ENCODE measurements at regions of chr16 and their contacts with region 1.

Region 1: DNA sequence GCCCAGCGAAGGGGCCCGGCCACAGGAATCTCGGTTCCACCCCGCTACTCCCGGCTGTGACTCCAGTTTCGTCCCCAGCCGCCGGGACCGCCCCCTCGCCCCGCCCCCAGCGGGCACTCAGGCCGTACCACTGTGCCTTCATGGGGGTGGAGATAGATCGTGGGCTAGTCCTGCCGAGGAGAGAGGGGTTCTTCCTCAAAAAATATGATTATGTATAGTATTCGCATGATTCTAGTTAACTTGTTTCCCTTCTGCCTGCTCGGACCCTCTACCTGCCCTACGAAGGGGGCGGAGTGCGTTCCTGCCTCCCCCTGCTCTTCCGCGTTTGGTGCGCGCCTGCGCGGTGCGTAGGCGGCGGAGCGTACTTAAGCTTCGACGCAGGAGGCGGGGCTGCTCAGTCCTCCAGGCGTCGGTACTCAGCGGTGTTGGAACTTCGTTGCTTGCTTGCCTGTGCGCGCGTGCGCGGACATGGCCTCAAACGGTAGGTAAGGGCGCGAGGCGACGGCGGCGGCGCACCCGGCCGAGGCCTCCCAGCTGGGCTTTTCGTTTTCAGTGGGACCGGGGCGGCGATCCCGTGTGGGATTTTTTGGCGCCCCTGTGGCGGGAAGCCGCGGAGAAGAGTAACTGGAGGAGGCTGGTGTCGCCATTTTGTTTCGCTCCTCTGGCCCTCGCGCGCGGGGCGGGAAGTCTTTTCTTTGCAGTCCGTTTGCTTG is at the start of gene FUS:
- DNase-seq: peak; percentile 83 to 98 (median 92)
- ATAC-seq: peak; percentile 54 to 62
- H3K4me3 Mint-ChIP-seq: peak within 1 kb of the TSS; percentile 92 to 98 (median 95)
- H3K27ac Mint-ChIP-seq: peak within 1 kb of the TSS; percentile 97 to 100 (median 99)
- H3K4me1 Mint-ChIP-seq: peaks cover 43 to 70% (median 59%) of the 10 kb centered on the region in 4 donors
- H3K27me3 Mint-ChIP-seq: peaks cover 0 to 3% (median 0%) of the 10 kb centered on the region in 5 donors
- polyA plus RNA-seq, gene FUS: 118 to 163 (median 149) TPM

Region 2: GRCh38 chr16:31073968-31074813 is 105.7 kb before region 1 on chr16 and contains the starts of genes ZNF646 and ZNF668:
- POLR2A ChIA-PET with region 1: interaction called, 41 read pairs
- DNase-seq: peak; percentile 90 to 99 (median 98)
- ATAC-seq: peak; percentile 80 to 84
- H3K4me3 Mint-ChIP-seq: peak within 1 kb of the TSS; percentile 81 to 97 (median 96)
- H3K27ac Mint-ChIP-seq: peak within 1 kb of the TSS; percentile 90 to 99 (median 96)
- H3K4me1 Mint-ChIP-seq: peaks cover 21 to 52% (median 45%) of the 10 kb centered on the region in 4 donors
- H3K27me3 Mint-ChIP-seq: no peaks in the 10 kb centered on the region
- polyA plus RNA-seq, gene ZNF646: 2.8 to 9.1 (median 4.0) TPM
- polyA plus RNA-seq, gene ZNF668: 4.2 to 9.1 (median 7.5) TPM

Region 3: DNA sequence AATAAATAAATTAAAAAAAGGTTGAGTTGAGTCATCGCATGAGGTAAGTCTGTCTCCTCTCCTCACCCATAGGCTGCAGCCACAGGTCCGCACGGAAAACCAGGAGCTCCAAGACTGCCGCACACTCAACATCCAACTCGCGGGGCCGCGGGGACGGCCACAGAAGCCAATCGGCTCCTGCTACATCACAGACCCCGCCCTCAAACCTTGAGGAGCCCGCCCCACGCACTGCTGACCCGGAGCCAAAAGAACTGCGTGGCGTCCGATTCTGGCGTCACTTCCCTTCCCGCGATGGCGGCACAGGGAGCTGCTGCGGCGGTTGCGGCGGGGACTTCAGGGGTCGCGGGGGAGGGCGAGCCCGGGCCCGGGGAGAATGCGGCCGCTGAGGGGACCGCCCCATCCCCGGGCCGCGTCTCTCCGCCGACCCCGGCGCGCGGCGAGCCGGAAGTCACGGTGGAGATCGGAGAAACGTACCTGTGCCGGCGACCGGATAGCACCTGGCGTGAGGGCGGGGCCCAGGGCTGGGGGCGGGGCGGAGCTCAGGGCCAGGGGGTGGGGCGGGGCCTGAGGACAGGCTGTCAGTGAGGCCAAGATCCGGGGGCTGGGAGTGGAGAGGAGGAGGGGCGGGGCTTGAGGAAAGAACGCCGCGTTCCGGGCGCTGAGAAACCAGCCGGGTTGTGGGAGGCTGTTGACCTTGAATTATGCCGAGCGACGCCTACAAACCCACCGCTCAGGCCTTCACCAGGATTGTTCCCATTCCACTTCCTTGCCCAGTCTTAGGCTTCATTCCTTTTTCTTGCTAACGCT is 62.3 kb before region 1 on chr16 and contains the start of gene KAT8:
- POLR2A ChIA-PET with region 1: interaction called, 39 read pairs
- DNase-seq: peak; percentile 93 to 99 (median 98)
- ATAC-seq: peak; percentile 92
- H3K4me3 Mint-ChIP-seq: peak within 1 kb of the TSS; percentile 83 to 93 (median 88)
- H3K27ac Mint-ChIP-seq: peak within 1 kb of the TSS; percentile 68 to 97 (median 94)
- H3K4me1 Mint-ChIP-seq: peaks cover 18 to 38% (median 24%) of the 10 kb centered on the region in 4 donors
- H3K27me3 Mint-ChIP-seq: no peaks in the 10 kb centered on the region
- polyA plus RNA-seq, gene KAT8: 58.0 to 90.5 (median 67.4) TPM

Region 4: GRCh38 chr16:31157136-31157535 is 22.8 kb before region 1 on chr16:
- POLR2A ChIA-PET with region 1: interaction called, 20 read pairs
- DNase-seq: no peak
- ATAC-seq: no peak
- H3K4me3 Mint-ChIP-seq: peak overlapping the region in 8 of 10 donors; percentile 31 to 65 (median 48)
- H3K27ac Mint-ChIP-seq: peak overlapping the region in 3 of 10 donors; percentile 35 to 66 (median 60)
- H3K4me1 Mint-ChIP-seq: peaks cover 0 to 11% (median 5%) of the 10 kb centered on the region in 4 donors
- H3K27me3 Mint-ChIP-seq: no peaks in the 10 kb centered on the region

Region 5: GRCh38 chr16:31196324-31197088 is 16.6 kb after region 1 on chr16:
- POLR2A ChIA-PET with region 1: interaction called, 164 read pairs
- DNase-seq: no peak
- ATAC-seq: no peak
- H3K4me3 Mint-ChIP-seq: peak overlapping the region in 1 of 10 donors; percentile 34
- H3K27ac Mint-ChIP-seq: peak overlapping the region in 8 of 10 donors; percentile 8 to 79 (median 62)
- H3K4me1 Mint-ChIP-seq: peaks cover 31 to 66% (median 58%) of the 10 kb centered on the region in 4 donors
- H3K27me3 Mint-ChIP-seq: no peaks in the 10 kb centered on the region

Region 6: DNA sequence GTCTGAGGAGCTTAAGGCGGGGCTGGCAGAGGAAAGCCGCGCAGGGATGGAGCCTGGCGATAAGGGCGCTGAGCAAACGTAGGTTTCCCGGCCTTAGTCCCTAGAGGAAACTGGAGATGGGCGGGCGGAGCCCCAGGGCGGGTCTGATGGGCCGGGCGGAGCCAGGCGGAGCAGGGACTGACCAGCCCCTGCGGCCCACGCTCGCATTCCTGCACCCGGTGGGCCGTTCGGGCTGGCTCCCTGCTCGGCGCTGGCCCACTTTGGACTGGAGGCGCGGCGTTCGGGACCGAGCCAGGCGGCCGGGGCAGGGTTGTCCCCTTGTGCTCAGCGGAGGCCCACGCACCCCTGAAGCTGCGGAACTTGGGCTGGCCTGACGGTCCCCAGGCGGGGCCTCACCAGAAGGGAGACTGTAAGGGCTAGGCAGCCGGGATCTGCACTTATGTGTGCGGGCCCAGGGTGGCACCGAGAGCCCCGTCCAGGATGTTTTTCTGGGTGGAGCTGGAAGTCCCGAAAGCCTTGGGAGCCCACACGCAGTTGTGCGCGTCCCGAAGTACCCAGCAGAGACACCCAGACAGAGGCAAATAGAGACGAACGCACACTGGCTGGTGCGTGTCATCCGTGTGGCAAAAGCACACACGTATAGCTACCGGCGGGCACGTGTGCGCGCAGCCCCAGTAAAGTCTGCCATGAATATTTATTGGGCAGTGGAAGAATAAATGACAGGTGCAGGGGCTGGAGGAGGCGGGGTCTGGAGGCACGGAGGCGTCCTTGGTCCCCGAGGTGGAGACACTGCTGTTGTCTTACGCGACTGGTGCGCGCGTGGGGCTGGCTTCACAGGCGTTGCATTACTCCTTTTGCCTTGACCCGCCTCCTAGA is 35.6 kb after region 1 on chr16:
- POLR2A ChIA-PET with region 1: interaction called, 15 read pairs
- DNase-seq: peak in 2 of 10 donors; percentile 15 to 23
- ATAC-seq: peak; percentile 51 to 73
- H3K4me3 Mint-ChIP-seq: peak overlapping the region; percentile 67 to 91 (median 81)
- H3K27ac Mint-ChIP-seq: peak overlapping the region in 4 of 10 donors; percentile 4 to 38 (median 28)
- H3K4me1 Mint-ChIP-seq: peaks cover 8 to 26% (median 23%) of the 10 kb centered on the region in 4 donors
- H3K27me3 Mint-ChIP-seq: peaks cover 6 to 47% (median 23%) of the 10 kb centered on the region in 5 donors

Region 7: DNA sequence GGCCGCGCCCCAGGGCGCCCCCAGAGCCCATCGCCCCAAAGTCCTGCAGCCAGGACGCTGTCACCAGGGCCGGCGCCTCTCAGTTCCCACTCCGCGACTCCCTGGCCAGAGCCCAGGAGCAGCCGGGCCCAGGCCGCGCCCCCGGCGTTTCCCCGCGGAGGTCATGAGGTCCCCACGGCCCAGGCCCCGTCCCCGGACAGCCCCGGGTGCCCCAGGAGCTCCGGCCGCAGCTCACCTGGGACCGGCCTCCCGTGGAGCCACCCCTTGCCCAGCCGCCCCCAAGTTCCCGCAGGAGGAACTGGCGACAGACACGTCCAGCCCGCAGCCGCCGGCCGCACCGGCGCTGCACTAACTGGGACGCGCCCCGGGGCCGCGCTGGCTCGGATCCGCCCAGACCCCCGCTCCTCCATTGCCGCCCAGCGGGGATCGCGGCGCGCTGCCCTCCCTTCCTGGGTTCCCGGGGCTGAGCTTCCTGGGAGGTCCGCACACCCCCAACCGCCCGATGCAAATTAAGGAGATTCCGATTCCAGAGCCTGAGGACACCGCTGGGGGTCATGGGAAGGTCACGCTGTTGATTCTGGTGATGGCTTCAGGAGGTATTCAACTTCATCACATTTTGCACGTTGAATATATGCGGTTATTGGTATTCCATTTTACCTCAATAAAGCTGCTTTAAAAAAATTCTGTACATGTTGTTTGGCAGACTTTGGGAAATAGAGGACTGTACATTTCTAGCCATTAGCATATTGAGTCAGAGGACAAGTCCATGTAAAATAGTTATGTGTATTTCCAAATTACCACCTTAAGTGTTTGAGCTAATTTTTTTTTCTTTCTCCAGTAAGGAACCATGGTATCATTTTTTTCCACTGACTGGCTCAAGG is 357.7 kb after region 1 on chr16:
- POLR2A ChIA-PET with region 1: no interaction called
- DNase-seq: no peak
- ATAC-seq: no peak
- H3K4me3 Mint-ChIP-seq: peak overlapping the region in 9 of 10 donors; percentile 55 to 81 (median 74)
- H3K27ac Mint-ChIP-seq: no peak overlapping the region
- H3K4me1 Mint-ChIP-seq: peaks cover 2 to 9% (median 5%) of the 10 kb centered on the region in 4 donors
- H3K27me3 Mint-ChIP-seq: peaks cover 19 to 52% (median 45%) of the 10 kb centered on the region in 5 donors

Measured in naive thymus-derived CD8-positive, alpha-beta T cell (primary cell).